Activated naive CD4-positive, alpha-beta T cell treated with anti-CD3 and anti-CD28 coated beads, Interleukin-2, amount 10 ng/mL, durations not matched to agents 7 days and 5 days (primary cell): ENCODE measurements at regions of chr14 and their contacts with region 1.

Region 1: DNA sequence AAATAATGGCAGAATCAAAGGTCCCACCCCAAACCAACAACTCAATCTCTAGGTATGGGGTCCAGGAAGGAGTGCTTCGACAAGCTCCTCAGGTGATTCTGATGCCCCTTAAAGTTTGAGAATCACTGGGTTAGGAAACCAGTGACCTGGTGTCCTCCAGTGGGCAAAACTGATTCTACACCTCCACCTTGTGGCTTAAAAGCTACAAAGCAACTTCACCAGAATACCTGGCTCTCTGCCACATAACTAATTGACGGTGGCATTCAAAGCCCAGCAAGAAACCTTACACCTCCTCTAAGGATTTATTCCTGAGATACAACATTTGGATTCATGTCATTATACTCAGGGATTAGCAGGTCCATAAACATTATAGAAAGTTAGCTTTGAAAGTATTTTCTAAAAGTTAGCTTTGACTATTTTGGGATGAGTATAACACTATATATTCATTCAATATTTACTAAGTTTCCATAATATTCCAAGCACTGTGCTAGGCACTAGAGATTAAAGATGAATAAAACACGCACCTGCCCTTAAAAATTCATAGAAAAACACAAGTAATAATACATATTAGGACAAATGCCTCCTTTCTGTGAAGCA is 45.4 kb downstream of the DCAF5 start:
- DNase-seq: peak; percentile 36
- H3K4me3 Mint-ChIP-seq: no peak overlapping the region
- H3K27ac Mint-ChIP-seq: no peak overlapping the region
- H3K4me1 Mint-ChIP-seq: no peaks in the 10 kb centered on the region
- H3K27me3 Mint-ChIP-seq: no peaks in the 10 kb centered on the region

Region 2: DNA sequence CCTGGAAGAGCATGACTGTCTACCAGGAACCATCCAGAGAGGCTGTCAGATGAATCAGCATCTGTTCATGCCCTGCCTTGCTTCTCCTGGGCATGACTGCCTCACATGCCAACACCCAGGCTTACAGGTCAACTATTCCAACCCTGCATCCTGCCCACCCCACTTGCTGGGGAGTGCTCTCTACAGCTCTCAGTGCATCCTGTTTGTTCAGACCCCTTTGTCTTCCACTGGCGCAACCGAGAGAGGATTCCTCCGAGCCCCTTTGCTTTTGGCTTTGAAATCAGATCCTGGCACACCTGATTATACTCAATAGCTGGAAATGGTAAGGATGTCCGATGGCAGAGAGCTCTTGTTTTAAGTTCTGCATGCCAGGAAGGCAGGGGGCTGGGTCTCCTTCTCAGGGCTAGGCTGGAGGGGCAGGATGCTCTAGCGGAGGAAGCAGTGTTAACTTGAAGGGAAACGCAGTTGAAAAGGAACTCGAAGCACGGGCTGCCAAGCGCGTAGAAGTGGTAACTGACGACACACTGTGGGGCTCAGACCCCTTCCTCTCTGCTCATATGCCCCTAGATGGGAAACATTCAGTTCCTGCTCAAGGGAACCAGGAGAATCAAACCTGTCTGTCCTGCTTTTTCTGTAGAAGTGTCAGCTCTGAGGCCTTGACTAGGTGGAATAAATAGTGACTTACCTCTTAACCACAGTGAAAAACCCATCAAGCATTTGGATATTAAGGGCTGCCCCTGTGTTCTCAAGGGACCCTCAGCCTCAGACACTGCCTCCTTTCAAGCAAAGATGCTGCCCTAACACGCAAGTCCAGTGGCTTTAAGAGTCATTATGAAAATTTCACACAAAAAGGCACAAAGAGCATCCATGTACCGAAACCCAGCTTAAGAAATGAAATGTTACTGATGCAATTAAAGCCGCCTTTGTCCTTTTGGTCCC is 612.1 kb before region 1 on chr14:
- CTCF ChIA-PET with region 1: no interaction called
- DNase-seq: no peak
- H3K4me3 Mint-ChIP-seq: no peak overlapping the region
- H3K27ac Mint-ChIP-seq: no peak overlapping the region
- H3K4me1 Mint-ChIP-seq: peaks cover 15% of the 10 kb centered on the region
- H3K27me3 Mint-ChIP-seq: peaks cover 12% of the 10 kb centered on the region

Region 3: GRCh38 chr14:69090187-69090789 is 17.2 kb before region 1 on chr14:
- CTCF ChIA-PET with region 1: interaction called, 16 read pairs
- DNase-seq: peak; percentile 56
- H3K4me3 Mint-ChIP-seq: no peak overlapping the region
- H3K27ac Mint-ChIP-seq: no peak overlapping the region
- H3K4me1 Mint-ChIP-seq: peaks cover 12% of the 10 kb centered on the region
- H3K27me3 Mint-ChIP-seq: no peaks in the 10 kb centered on the region

Region 4: DNA sequence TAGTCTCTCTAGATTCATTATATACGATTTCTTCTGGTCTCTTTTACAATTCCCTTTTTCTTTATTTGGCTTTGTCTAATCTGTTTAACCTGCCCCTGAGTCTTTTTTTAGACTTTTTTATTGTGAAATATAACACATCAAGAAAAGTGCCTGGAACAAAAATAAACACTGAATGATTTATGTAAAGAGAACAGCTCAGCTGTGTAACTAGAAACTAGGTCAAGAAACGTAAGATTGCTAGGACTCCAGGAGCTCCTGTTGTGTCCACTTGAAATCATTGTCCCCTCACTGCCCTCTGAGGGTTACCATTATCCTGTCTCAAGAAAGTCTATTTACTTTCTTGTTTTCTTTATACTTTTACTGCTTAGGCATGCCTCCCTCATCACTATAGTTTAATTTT is 106.9 kb after region 1 on chr14:
- CTCF ChIA-PET with region 1: no interaction called
- DNase-seq: no peak
- H3K4me3 Mint-ChIP-seq: no peak overlapping the region
- H3K27ac Mint-ChIP-seq: no peak overlapping the region
- H3K4me1 Mint-ChIP-seq: peaks cover 2% of the 10 kb centered on the region
- H3K27me3 Mint-ChIP-seq: no peaks in the 10 kb centered on the region